ENCODE measurements at regions of chr9 and their contacts with region 1.

Region 1: DNA sequence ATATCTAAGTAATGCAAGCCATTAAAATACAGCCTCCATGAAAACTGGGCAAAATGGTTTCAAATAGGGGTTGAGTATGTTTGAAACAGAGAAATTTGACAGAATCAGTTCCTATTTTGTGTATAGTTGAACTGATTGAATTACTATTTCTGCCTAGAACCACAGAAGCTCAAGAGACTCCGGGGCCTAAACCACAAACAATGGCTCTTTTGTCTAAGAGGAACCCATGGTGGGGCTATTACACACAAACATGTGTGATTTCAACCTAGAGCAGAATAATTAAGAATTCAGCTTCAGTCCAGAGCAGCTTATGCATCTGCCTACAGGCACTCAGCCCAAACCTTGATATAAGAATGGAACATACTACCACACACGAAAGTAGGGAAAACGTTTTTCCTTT is 171.2 kb upstream of the MPDZ start:
- DNase-seq: no peak
- H3K4me3 Mint-ChIP-seq: no peak overlapping the region
- H3K27ac Mint-ChIP-seq: no peak overlapping the region
- H3K4me1 Mint-ChIP-seq: peaks cover 6% of the 10 kb centered on the region
- H3K27me3 Mint-ChIP-seq: no peaks in the 10 kb centered on the region
- CTCF ChIP-seq: no peak

Region 2: GRCh38 chr9:13915591-13916326 is 465.0 kb after region 1 on chr9:
- CTCF ChIA-PET with region 1: no interaction called
- POLR2A ChIA-PET with region 1: no interaction called
- intact Hi-C with region 1: no loop called
- DNase-seq: peak; percentile 24
- H3K4me3 Mint-ChIP-seq: no peak overlapping the region
- H3K27ac Mint-ChIP-seq: no peak overlapping the region
- H3K4me1 Mint-ChIP-seq: peaks cover 18% of the 10 kb centered on the region
- H3K27me3 Mint-ChIP-seq: no peaks in the 10 kb centered on the region
- CTCF ChIP-seq: no peak

Region 3: GRCh38 chr9:14096258-14096922 is 645.7 kb after region 1 on chr9:
- CTCF ChIA-PET with region 1: interaction called, 4 read pairs
- POLR2A ChIA-PET with region 1: no interaction called
- intact Hi-C with region 1: loop called (anchors 10 kb)
- DNase-seq: peak; percentile 72
- H3K4me3 Mint-ChIP-seq: peak overlapping the region; percentile 63
- H3K27ac Mint-ChIP-seq: peak overlapping the region; percentile 80
- H3K4me1 Mint-ChIP-seq: peaks cover 29% of the 10 kb centered on the region
- H3K27me3 Mint-ChIP-seq: no peaks in the 10 kb centered on the region
- CTCF ChIP-seq: no peak

Measured in MCF 10A (cell line).